Heart right ventricle (tissue), 16 donors: ENCODE measurements at regions of chr2 and their contacts with region 1.

Region 1: GRCh38 chr2:101362316-101362715 is 25.0 kb downstream of the CREG2 start:
- DNase-seq: no peak
- ATAC-seq: no peak
- H3K4me3 ChIP-seq: no peak overlapping the region
- H3K27ac ChIP-seq: peak overlapping the region in 1 of 10 donors; percentile 7
- H3K4me1 ChIP-seq: peaks cover 0 to 13% (median 0%) of the 10 kb centered on the region in 9 donors
- H3K27me3 ChIP-seq: peaks cover 0 to 3% (median 0%) of the 10 kb centered on the region in 7 donors
- CTCF ChIP-seq: no peak

Region 2: GRCh38 chr2:101328474-101329007 is 33.8 kb before region 1 on chr2:
- intact Hi-C with region 1: loop called in 1 of 10 experiments (anchors 2 kb)
- DNase-seq: peak in 1 of 2 donors; percentile 26
- ATAC-seq: peak; percentile 67 to 88 (median 84)
- H3K4me3 ChIP-seq: no peak overlapping the region
- H3K27ac ChIP-seq: peak overlapping the region in 6 of 10 donors; percentile 15 to 92 (median 47)
- H3K4me1 ChIP-seq: peaks cover 0 to 49% (median 12%) of the 10 kb centered on the region in 9 donors
- H3K27me3 ChIP-seq: no peaks in the 10 kb centered on the region
- CTCF ChIP-seq: no peak